HCT116 (cell line): ENCODE measurements at regions of chr9 and their contacts with region 1.

Region 1: DNA sequence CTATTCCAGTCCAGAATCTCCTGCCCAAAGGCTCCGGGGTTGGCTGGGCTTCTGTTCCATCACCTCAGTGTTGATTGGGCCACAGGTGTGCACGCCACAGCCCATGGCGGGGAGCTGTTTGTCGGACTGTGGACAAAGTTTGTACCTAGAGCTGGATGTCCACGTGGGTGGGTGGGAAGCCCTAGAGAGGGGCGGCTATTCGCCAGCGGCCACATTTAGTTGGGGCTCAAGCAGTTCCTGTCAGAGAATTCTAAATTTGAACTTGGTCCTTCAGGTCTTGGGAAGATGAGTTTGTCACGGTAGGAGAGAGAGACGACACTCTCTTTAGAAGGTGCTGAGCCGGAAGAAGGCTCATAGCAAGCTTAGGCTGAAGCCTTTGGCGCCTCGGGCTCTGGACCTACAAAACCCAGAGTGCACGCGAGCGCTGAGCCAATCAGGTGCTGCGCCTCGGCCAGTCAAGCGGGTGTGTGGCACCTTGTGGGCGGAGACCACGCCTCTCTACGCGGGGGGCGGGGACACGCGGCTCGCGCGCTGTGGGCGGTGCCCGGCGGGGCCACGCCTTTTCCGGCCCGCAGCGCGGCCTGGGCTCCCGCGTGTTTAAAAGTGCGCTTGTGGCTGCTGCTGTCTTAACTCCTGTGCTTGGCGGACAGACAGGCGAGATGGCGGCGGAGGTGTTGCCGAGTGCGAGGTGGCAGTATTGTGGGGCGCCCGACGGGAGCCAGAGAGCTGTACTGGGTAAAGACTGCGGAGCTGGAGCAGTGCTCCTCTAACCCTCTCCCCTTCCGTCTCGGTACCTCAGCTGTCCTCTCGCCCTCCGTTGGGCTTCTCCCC is at the start of gene POLR1E:
- DNase-seq: peak; percentile 84
- ATAC-seq: peak; percentile 91
- H3K4me3 ChIP-seq: peak within 1 kb of the TSS; percentile 92 to 100
- H3K27ac ChIP-seq: peak within 1 kb of the TSS; percentile 63
- H3K4me1 ChIP-seq: peaks cover 12 to 44% of the 10 kb centered on the region in 2 experiments
- H3K27me3 ChIP-seq: no peaks in the 10 kb centered on the region
- CTCF ChIP-seq: no peak
- POLR2A ChIP-seq: peak; percentile 75
- RAD21 ChIP-seq: no peak
- total RNA-seq, gene POLR1E: 60.9 TPM

Region 2: GRCh38 chr9:37465249-37466036 is 20.2 kb before region 1 on chr9 and contains the start of gene ZBTB5:
- CTCF ChIA-PET with region 1: no interaction called
- POLR2A ChIA-PET with region 1: interaction called, 16 read pairs
- RAD21 ChIA-PET with region 1: no interaction called
- intact Hi-C with region 1: no loop called
- DNase-seq: peak; percentile 99
- ATAC-seq: peak; percentile 76
- H3K4me3 ChIP-seq: peak within 1 kb of the TSS; percentile 72 to 96
- H3K27ac ChIP-seq: peak within 1 kb of the TSS; percentile 87
- H3K4me1 ChIP-seq: peaks cover 13 to 36% of the 10 kb centered on the region in 2 experiments
- H3K27me3 ChIP-seq: no peaks in the 10 kb centered on the region
- CTCF ChIP-seq: no peak
- POLR2A ChIP-seq: no peak
- RAD21 ChIP-seq: no peak
- total RNA-seq, gene ZBTB5: 22.3 TPM

Region 3: DNA sequence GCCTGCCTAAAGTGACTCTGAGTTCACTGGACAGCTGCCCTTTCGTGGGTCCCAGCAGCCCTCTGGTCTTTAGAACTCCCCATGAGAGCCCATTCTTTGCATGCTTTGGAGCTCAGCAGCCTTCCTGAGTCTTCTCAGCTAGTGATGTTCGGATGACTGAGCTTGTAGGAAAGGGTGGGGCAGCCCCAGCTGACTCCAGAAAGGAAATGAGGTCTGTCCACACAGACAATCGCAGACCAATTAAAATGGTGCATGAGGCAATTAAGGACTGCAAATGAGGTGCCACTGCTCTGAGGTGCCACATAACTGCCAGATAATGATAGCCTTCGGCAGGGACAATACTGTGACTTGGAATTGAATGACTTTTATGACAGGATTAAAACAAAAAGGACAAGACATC is 132.2 kb after region 1 on chr9:
- CTCF ChIA-PET with region 1: no interaction called
- POLR2A ChIA-PET with region 1: no interaction called
- RAD21 ChIA-PET with region 1: no interaction called
- intact Hi-C with region 1: no loop called
- DNase-seq: no peak
- ATAC-seq: no peak
- H3K4me3 ChIP-seq: no peak overlapping the region
- H3K27ac ChIP-seq: no peak overlapping the region
- H3K4me1 ChIP-seq: no peaks in the 10 kb centered on the region
- H3K27me3 ChIP-seq: no peaks in the 10 kb centered on the region
- CTCF ChIP-seq: no peak
- POLR2A ChIP-seq: no peak
- RAD21 ChIP-seq: no peak

Region 4: DNA sequence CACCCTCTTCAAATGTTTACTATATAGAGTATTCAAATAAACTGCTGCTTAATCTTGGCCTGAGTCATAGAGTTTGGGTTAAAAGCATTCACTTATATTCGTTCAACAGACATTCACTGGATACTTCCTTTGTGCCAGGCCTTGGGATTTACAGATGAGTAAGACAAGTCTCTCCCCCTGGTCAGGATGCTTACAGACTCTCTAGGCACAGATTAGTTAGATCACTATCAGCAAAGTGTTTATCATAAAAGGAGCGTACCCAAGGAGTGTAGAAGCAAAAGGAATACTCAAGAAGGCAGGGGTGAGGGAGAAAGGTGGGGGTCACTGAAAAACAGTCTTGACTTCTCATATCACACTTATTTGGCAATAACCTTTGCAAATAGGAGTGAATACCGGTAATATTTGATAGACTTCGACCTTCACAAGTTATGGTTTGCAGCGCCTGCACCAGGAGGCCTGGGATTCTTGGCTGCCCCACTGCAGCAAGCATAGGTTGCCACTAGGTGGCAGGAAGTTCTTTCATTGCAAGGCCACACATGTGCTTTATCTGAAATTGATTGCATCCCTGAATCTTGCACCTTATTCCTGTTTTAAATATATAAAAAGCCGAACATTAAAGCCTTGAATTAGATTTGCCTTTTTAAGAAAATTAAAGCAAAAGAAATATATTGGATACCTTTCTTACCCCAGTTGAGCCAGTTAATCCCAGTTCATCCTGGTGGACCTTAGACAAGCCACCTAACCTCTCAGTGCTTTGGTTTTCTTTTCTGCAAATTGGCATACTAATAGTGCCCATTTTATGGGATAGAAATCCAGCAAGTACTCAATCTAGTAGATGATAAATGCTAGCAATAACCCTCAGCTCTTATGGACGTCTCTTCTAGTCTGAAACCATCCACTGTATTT is 261.5 kb after region 1 on chr9:
- CTCF ChIA-PET with region 1: no interaction called
- POLR2A ChIA-PET with region 1: no interaction called
- RAD21 ChIA-PET with region 1: no interaction called
- intact Hi-C with region 1: loop called (anchors 10 kb)
- DNase-seq: peak; percentile 59
- ATAC-seq: peak; percentile 96
- H3K4me3 ChIP-seq: no peak overlapping the region
- H3K27ac ChIP-seq: no peak overlapping the region
- H3K4me1 ChIP-seq: no peaks in the 10 kb centered on the region
- H3K27me3 ChIP-seq: no peaks in the 10 kb centered on the region
- CTCF ChIP-seq: peak; percentile 92 to 96 (median 94)
- POLR2A ChIP-seq: no peak
- RAD21 ChIP-seq: peak; percentile 88

Region 5: GRCh38 chr9:37903647-37904444 is 418.2 kb after region 1 on chr9 and contains the start of gene SLC25A51:
- CTCF ChIA-PET with region 1: no interaction called
- POLR2A ChIA-PET with region 1: no interaction called
- RAD21 ChIA-PET with region 1: no interaction called
- intact Hi-C with region 1: loop called (anchors 1 kb)
- DNase-seq: peak; percentile 87
- ATAC-seq: peak; percentile 91
- H3K4me3 ChIP-seq: peak within 1 kb of the TSS; percentile 83 to 87
- H3K27ac ChIP-seq: peak within 1 kb of the TSS; percentile 88
- H3K4me1 ChIP-seq: peaks cover 9 to 18% of the 10 kb centered on the region in 2 experiments; a peak in 2 of 4 replicates
- H3K27me3 ChIP-seq: no peaks in the 10 kb centered on the region
- CTCF ChIP-seq: peak; percentile 85 to 92 (median 88)
- POLR2A ChIP-seq: peak; percentile 85
- RAD21 ChIP-seq: peak; percentile 85
- total RNA-seq, gene SLC25A51: 27.3 TPM

Region 6: DNA sequence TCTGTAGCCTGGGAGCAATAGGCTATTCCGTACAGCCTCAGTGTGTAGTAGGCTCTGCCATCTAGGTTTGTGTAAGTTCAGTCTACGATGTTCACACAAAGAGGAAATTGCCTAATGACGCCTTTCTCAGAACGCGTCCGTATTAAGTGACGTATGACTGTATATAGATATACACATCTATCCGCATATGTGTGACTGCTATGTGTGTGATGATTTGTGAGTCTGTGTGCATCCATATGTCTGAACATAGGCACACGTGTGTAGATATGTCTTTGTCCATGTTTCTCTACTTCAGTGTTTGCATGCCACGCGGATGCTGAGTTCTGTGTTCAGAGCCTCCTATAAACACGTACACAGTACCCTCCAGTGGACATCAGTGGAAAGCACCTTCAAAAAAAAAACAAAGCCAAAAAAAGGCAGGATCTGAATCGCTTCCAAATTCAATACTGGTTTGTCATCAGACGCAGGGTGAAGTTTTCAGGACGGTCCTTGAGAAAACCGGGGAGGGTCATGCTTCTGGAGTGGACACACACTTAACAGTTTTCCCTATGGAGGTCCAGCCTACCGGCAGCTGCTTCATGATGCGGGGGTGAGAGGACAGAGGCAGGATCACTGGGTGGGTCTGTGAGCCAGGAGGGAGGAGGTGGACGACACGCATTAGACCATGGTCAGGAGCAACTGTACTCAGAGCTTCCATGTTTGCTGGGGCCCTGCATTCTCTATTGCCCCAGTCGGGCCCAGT is 877.4 kb after region 1 on chr9:
- CTCF ChIA-PET with region 1: interaction called, 3 read pairs
- POLR2A ChIA-PET with region 1: no interaction called
- RAD21 ChIA-PET with region 1: interaction called in 1 of 2 experiments, 5 read pairs
- intact Hi-C with region 1: loop called (anchors 1 kb)
- DNase-seq: peak; percentile 63
- ATAC-seq: peak; percentile 82
- H3K4me3 ChIP-seq: no peak overlapping the region
- H3K27ac ChIP-seq: no peak overlapping the region
- H3K4me1 ChIP-seq: peaks cover 0 to 5% of the 10 kb centered on the region in 2 experiments; a peak in 2 of 4 replicates
- H3K27me3 ChIP-seq: no peaks in the 10 kb centered on the region
- CTCF ChIP-seq: peak; percentile 59 to 89 (median 73)
- POLR2A ChIP-seq: no peak
- RAD21 ChIP-seq: peak; percentile 97